ENCODE measurements at regions of chr21 and their contacts with region 1.

Region 1: DNA sequence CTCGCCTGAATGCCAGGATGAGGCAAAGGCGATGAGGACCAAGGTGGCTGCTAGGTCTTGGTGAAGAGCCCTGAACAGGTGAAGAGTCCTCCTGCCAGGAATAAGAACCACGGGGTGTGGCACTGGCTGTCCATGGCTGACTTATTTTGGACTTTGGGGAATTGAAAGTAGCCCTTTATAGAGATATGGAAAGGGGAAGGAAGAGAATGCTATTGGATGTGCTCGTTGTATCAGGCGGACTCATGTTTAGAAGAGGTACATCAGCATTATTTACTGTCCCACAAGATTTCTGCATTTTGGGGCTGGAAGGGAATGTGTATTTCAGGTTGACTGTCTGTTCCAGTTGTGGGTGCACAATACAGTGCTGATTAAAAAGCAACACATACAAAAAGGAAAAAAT is 465.8 kb downstream of the DSCAM start:
- DNase-seq: no peak
- H3K4me3 ChIP-seq: no peak overlapping the region
- H3K27ac ChIP-seq: no peak overlapping the region
- H3K27me3 ChIP-seq: no peaks in the 10 kb centered on the region
- CTCF ChIP-seq: no peak

Region 2: DNA sequence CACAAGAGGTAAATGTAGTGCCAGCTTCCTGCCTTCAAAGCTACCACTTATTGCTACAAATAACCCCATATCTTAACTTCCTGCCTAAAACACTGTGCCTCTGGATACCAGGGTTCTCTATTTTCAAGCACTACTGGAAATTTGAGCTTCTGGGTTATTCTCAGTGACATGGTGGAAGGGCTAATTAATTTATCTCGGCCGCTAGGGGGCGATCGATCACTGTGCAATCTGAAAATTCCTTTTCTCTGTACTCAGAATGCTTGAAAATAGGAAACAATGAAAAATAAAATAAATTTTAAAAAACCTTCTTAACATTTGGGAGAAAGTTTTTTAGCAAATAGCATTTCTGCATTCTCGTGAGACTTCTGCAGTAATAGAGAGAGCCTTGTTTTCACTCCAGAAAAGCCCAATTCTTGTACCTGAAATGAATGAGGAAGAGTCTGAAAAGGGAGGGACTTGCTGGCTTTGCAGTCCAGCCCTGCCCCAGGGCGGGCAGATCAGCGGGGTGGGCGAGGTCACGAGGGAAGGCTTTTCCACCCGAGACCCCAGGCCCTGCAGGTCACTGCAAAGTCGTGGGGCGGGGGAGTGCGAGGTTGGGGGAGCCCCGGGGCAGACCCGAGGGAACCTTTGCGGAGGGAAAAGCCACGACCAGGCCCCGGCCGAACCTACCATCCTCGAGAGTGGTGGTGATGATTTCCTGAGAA is 237.1 kb before region 1 on chr21:
- intact Hi-C with region 1: loop called in 1 of 2 experiments (anchors 5 kb)
- DNase-seq: peak in 9 of 10 donors; percentile 45 to 81 (median 68)
- H3K4me3 ChIP-seq: no peak overlapping the region
- H3K27ac ChIP-seq: no peak overlapping the region
- H3K27me3 ChIP-seq: peaks cover 0 to 10% (median 0%) of the 10 kb centered on the region in 45 donors
- CTCF ChIP-seq: peak; percentile 72 to 98 (median 87)